CD4-positive, alpha-beta memory T cell (primary cell): ENCODE measurements at regions of chr20 and their contacts with region 1.

Region 1: GRCh38 chr20:46689082-46689754 is at the start of gene TP53RK:
- DNase-seq: peak; percentile 95 to 98 (median 96)
- H3K4me3 ChIP-seq: peak within 1 kb of the TSS; percentile 59 to 92
- H3K4me3 Mint-ChIP-seq: peak within 1 kb of the TSS; percentile 95 to 100 (median 98)
- H3K27ac ChIP-seq: peak within 1 kb of the TSS; percentile 85
- H3K27ac Mint-ChIP-seq: peak within 1 kb of the TSS; percentile 84 to 100 (median 97)
- H3K4me1 ChIP-seq: peaks cover 46% of the 10 kb centered on the region
- H3K4me1 Mint-ChIP-seq: peaks cover 27 to 48% (median 41%) of the 10 kb centered on the region in 4 donors
- H3K27me3 ChIP-seq: no peaks in the 10 kb centered on the region
- H3K27me3 Mint-ChIP-seq: no peaks in the 10 kb centered on the region
- total RNA-seq, gene TP53RK: 25.7 to 29.4 TPM

Region 2: GRCh38 chr20:46013826-46014516 is 675.2 kb before region 1 on chr20:
- CTCF ChIA-PET with region 1: no interaction called
- POLR2A ChIA-PET with region 1: no interaction called
- intact Hi-C with region 1: loop called (anchors 5 kb)
- DNase-seq: peak; percentile 59 to 82 (median 64)
- H3K4me3 ChIP-seq: peak overlapping the region in 1 of 2 donors; percentile 33
- H3K4me3 Mint-ChIP-seq: peak overlapping the region; percentile 45 to 81 (median 64)
- H3K27ac ChIP-seq: no peak overlapping the region
- H3K27ac Mint-ChIP-seq: peak overlapping the region in 3 of 7 donors; percentile 54 to 78 (median 57)
- H3K4me1 ChIP-seq: peaks cover 50% of the 10 kb centered on the region
- H3K4me1 Mint-ChIP-seq: peaks cover 25 to 67% (median 45%) of the 10 kb centered on the region in 4 donors
- H3K27me3 ChIP-seq: peaks cover 30% of the 10 kb centered on the region
- H3K27me3 Mint-ChIP-seq: peaks cover 26 to 61% of the 10 kb centered on the region in 2 donors

Region 3: GRCh38 chr20:46406199-46406985 is 282.8 kb before region 1 on chr20 and contains the start of gene ELMO2:
- CTCF ChIA-PET with region 1: no interaction called
- POLR2A ChIA-PET with region 1: no interaction called
- intact Hi-C with region 1: loop called (anchors 1 kb)
- DNase-seq: peak; percentile 94 to 98 (median 95)
- H3K4me3 ChIP-seq: peak within 1 kb of the TSS; percentile 64 to 73
- H3K4me3 Mint-ChIP-seq: peak within 1 kb of the TSS; percentile 91 to 99 (median 96)
- H3K27ac ChIP-seq: peak within 1 kb of the TSS; percentile 95
- H3K27ac Mint-ChIP-seq: peak within 1 kb of the TSS; percentile 96 to 99 (median 97)
- H3K4me1 ChIP-seq: peaks cover 63% of the 10 kb centered on the region
- H3K4me1 Mint-ChIP-seq: peaks cover 49 to 83% (median 66%) of the 10 kb centered on the region in 4 donors
- H3K27me3 ChIP-seq: no peaks in the 10 kb centered on the region
- H3K27me3 Mint-ChIP-seq: peaks cover 0 to 3% of the 10 kb centered on the region in 2 donors
- total RNA-seq, gene ELMO2: 65.1 to 70.7 TPM

Region 4: GRCh38 chr20:46520976-46521579 is 168.1 kb before region 1 on chr20:
- CTCF ChIA-PET with region 1: no interaction called
- POLR2A ChIA-PET with region 1: no interaction called
- intact Hi-C with region 1: no loop called
- DNase-seq: peak; percentile 9 to 43 (median 15)
- H3K4me3 ChIP-seq: no peak overlapping the region
- H3K4me3 Mint-ChIP-seq: no peak overlapping the region
- H3K27ac ChIP-seq: no peak overlapping the region
- H3K27ac Mint-ChIP-seq: no peak overlapping the region
- H3K4me1 ChIP-seq: no peaks in the 10 kb centered on the region
- H3K4me1 Mint-ChIP-seq: no peaks in the 10 kb centered on the region
- H3K27me3 ChIP-seq: no peaks in the 10 kb centered on the region
- H3K27me3 Mint-ChIP-seq: peaks cover 8 to 16% of the 10 kb centered on the region in 2 donors

Region 5: GRCh38 chr20:46970923-46971616 is 281.9 kb after region 1 on chr20:
- CTCF ChIA-PET with region 1: no interaction called
- POLR2A ChIA-PET with region 1: no interaction called
- intact Hi-C with region 1: no loop called
- DNase-seq: peak in 4 of 5 donors; percentile 2 to 32 (median 14)
- H3K4me3 ChIP-seq: no peak overlapping the region
- H3K4me3 Mint-ChIP-seq: peak overlapping the region in 1 of 8 donors; percentile 11
- H3K27ac ChIP-seq: no peak overlapping the region
- H3K27ac Mint-ChIP-seq: peak overlapping the region in 2 of 7 donors; percentile 18 to 25
- H3K4me1 ChIP-seq: no peaks in the 10 kb centered on the region
- H3K4me1 Mint-ChIP-seq: peaks cover 0 to 5% (median 2%) of the 10 kb centered on the region in 4 donors
- H3K27me3 ChIP-seq: no peaks in the 10 kb centered on the region
- H3K27me3 Mint-ChIP-seq: peaks cover 2 to 15% of the 10 kb centered on the region in 2 donors